B cell (primary cell): ENCODE measurements at regions of chr2 and their contacts with region 1.

Region 1: GRCh38 chr2:241950413-241951315 is 81.1 kb downstream of the RTP5 start:
- DNase-seq: peak; percentile 82
- ATAC-seq: peak; percentile 67
- H3K4me3 ChIP-seq: no peak overlapping the region
- H3K4me3 Mint-ChIP-seq: no peak overlapping the region
- H3K27ac ChIP-seq: no peak overlapping the region
- H3K27ac Mint-ChIP-seq: no peak overlapping the region
- H3K4me1 ChIP-seq: peaks cover 4 to 12% of the 10 kb centered on the region in 2 donors
- H3K4me1 Mint-ChIP-seq: peaks cover 21% of the 10 kb centered on the region
- H3K27me3 ChIP-seq: no peaks in the 10 kb centered on the region
- H3K27me3 Mint-ChIP-seq: no peaks in the 10 kb centered on the region
- CTCF ChIP-seq: peak; percentile 89

Region 2: DNA sequence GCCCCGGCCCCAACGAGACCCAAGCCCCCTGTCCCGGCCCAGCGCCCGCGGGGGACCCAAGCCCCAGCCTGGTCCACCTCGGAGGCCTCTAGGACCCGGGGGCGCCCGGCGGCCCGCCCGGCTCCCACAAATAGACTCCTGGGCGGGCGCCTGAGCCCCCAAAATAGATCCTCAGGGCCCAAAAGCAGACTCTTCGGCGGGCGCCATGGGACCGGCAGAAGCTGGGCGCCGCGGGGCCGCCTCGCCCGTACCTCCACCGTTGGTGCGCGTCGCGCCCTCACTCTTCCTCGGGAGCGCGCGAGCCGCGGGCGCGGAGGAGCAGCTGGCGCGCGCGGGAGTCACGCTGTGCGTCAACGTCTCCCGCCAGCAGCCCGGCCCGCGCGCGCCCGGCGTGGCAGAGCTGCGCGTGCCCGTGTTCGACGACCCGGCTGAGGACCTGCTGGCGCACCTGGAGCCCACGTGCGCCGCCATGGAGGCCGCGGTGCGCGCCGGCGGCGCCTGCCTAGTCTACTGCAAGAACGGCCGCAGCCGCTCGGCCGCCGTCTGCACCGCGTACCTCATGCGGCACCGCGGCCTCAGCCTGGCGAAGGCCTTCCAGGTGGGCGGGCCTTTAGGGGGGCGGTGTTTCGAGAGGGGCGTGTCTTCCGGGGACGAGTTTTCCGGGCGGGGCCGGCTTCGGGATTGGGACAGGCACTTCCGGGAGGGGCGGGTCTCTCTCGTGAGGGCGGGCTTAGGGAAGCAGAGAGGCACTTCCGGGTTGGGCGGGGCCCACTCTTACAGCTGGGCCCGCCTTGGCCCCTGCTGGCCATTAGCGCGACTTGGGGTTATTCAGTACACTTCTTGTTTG is 1390.0 kb before region 1 on chr2:
- CTCF ChIA-PET with region 1: no interaction called
- POLR2A ChIA-PET with region 1: no interaction called
- intact Hi-C with region 1: no loop called
- DNase-seq: peak; percentile 99
- ATAC-seq: peak; percentile 67
- H3K4me3 ChIP-seq: peak overlapping the region; percentile 65 to 86 (median 74)
- H3K4me3 Mint-ChIP-seq: peak overlapping the region; percentile 81
- H3K27ac ChIP-seq: peak overlapping the region; percentile 89 to 98
- H3K27ac Mint-ChIP-seq: peak overlapping the region; percentile 96
- H3K4me1 ChIP-seq: peaks cover 52 to 66% of the 10 kb centered on the region in 2 donors
- H3K4me1 Mint-ChIP-seq: peaks cover 71% of the 10 kb centered on the region
- H3K27me3 ChIP-seq: no peaks in the 10 kb centered on the region
- H3K27me3 Mint-ChIP-seq: no peaks in the 10 kb centered on the region
- CTCF ChIP-seq: no peak

Region 3: GRCh38 chr2:241908686-241909420 is 41.8 kb before region 1 on chr2:
- CTCF ChIA-PET with region 1: no interaction called
- POLR2A ChIA-PET with region 1: no interaction called
- intact Hi-C with region 1: no loop called
- DNase-seq: no peak
- ATAC-seq: no peak
- H3K4me3 ChIP-seq: no peak overlapping the region
- H3K4me3 Mint-ChIP-seq: no peak overlapping the region
- H3K27ac ChIP-seq: no peak overlapping the region
- H3K27ac Mint-ChIP-seq: no peak overlapping the region
- H3K4me1 ChIP-seq: no peaks in the 10 kb centered on the region
- H3K4me1 Mint-ChIP-seq: peaks cover 4% of the 10 kb centered on the region
- H3K27me3 ChIP-seq: no peaks in the 10 kb centered on the region
- H3K27me3 Mint-ChIP-seq: no peaks in the 10 kb centered on the region
- CTCF ChIP-seq: no peak

Region 4: GRCh38 chr2:241965931-241966412 is 15.3 kb after region 1 on chr2:
- CTCF ChIA-PET with region 1: interaction called, 19 read pairs
- POLR2A ChIA-PET with region 1: no interaction called
- intact Hi-C with region 1: no loop called
- DNase-seq: peak; percentile 79
- ATAC-seq: peak; percentile 80
- H3K4me3 ChIP-seq: peak overlapping the region in 4 of 5 experiments; percentile 28 to 51 (median 36)
- H3K4me3 Mint-ChIP-seq: peak overlapping the region; percentile 87
- H3K27ac ChIP-seq: peak overlapping the region; percentile 70 to 74
- H3K27ac Mint-ChIP-seq: peak overlapping the region; percentile 86
- H3K4me1 ChIP-seq: peaks cover 62 to 65% of the 10 kb centered on the region in 2 donors
- H3K4me1 Mint-ChIP-seq: peaks cover 64% of the 10 kb centered on the region
- H3K27me3 ChIP-seq: no peaks in the 10 kb centered on the region
- H3K27me3 Mint-ChIP-seq: no peaks in the 10 kb centered on the region
- CTCF ChIP-seq: no peak

Region 5: DNA sequence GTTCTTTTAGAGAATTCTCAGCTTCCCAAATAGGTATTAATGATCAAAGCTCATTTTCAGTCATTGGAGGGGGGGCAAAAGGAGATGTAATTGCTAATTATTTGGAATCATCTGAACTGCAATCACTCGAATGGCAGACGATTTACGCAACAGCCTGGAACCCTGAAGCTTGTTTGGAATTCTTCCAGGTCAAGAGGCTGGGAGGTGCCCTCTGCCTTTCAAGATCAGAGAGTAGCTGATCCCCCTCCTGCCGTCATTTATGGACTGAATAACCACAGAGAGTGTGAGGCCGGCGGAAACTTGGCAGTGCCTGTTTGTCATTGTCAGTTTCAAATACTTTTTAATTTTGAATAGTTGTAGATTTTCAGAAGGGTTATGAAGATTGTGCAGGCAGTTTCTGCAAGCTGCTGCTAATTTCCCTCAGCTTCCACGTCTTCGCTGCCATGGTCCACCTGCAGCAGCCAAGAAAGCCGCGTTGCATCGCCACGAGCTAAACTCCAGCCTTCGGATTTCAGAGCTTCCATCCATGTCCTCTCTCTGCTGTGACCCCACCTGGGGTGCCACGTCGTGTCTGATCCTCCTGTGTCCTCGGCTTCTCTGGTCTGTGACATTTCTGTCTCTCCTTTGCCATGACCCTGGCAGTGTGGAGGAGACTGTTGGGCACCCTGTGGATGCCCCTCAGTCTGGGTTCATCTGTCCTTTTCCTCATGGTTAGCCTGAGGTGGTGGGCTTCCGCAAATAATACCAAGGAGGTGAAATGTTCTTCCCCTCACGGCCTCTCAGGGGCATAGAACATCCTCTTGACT is 25.4 kb after region 1 on chr2:
- CTCF ChIA-PET with region 1: interaction called, 27 read pairs
- POLR2A ChIA-PET with region 1: no interaction called
- intact Hi-C with region 1: no loop called
- DNase-seq: no peak
- ATAC-seq: no peak
- H3K4me3 ChIP-seq: no peak overlapping the region
- H3K4me3 Mint-ChIP-seq: no peak overlapping the region
- H3K27ac ChIP-seq: no peak overlapping the region
- H3K27ac Mint-ChIP-seq: peak overlapping the region; percentile 63
- H3K4me1 ChIP-seq: peaks cover 9 to 24% of the 10 kb centered on the region in 2 donors
- H3K4me1 Mint-ChIP-seq: peaks cover 34% of the 10 kb centered on the region
- H3K27me3 ChIP-seq: no peaks in the 10 kb centered on the region
- H3K27me3 Mint-ChIP-seq: no peaks in the 10 kb centered on the region
- CTCF ChIP-seq: no peak

Region 6: GRCh38 chr2:241999184-241999583 is 48.5 kb after region 1 on chr2:
- CTCF ChIA-PET with region 1: interaction called, 13 read pairs
- POLR2A ChIA-PET with region 1: no interaction called
- intact Hi-C with region 1: no loop called
- DNase-seq: no peak
- ATAC-seq: no peak
- H3K4me3 ChIP-seq: no peak overlapping the region
- H3K4me3 Mint-ChIP-seq: no peak overlapping the region
- H3K27ac ChIP-seq: no peak overlapping the region
- H3K27ac Mint-ChIP-seq: no peak overlapping the region
- H3K4me1 ChIP-seq: no peaks in the 10 kb centered on the region
- H3K4me1 Mint-ChIP-seq: no peaks in the 10 kb centered on the region
- H3K27me3 ChIP-seq: no peaks in the 10 kb centered on the region
- H3K27me3 Mint-ChIP-seq: no peaks in the 10 kb centered on the region
- CTCF ChIP-seq: no peak

Region 7: GRCh38 chr2:242020196-242021004 is 69.7 kb after region 1 on chr2:
- CTCF ChIA-PET with region 1: interaction called, 33 read pairs
- POLR2A ChIA-PET with region 1: no interaction called
- intact Hi-C with region 1: no loop called
- DNase-seq: peak; percentile 41
- ATAC-seq: no peak
- H3K4me3 ChIP-seq: no peak overlapping the region
- H3K4me3 Mint-ChIP-seq: no peak overlapping the region
- H3K27ac ChIP-seq: no peak overlapping the region
- H3K27ac Mint-ChIP-seq: no peak overlapping the region
- H3K4me1 ChIP-seq: no peaks in the 10 kb centered on the region
- H3K4me1 Mint-ChIP-seq: peaks cover 15% of the 10 kb centered on the region
- H3K27me3 ChIP-seq: peaks cover 0 to 27% (median 2%) of the 10 kb centered on the region in 4 experiments
- H3K27me3 Mint-ChIP-seq: peaks cover 33% of the 10 kb centered on the region
- CTCF ChIP-seq: no peak